IMR-90 (cell line): ENCODE measurements at regions of chr21 and their contacts with region 1.

Region 1: GRCh38 chr21:17925000-17925610 is 105.9 kb upstream of the C21orf91 start:
- DNase-seq: peak; percentile 54
- ATAC-seq: peak; percentile 88
- H3K4me3 ChIP-seq: no peak overlapping the region
- H3K27ac ChIP-seq: no peak overlapping the region
- H3K4me1 ChIP-seq: 0 out of 2 replicates have a peak, but pooled peaks cover 1% of the 10 kb centered on the region
- H3K27me3 ChIP-seq: no peaks in the 10 kb centered on the region; the same call in 1 of the 2 replicates
- CTCF ChIP-seq: peak; percentile 68
- POLR2A ChIP-seq: no peak
- RAD21 ChIP-seq: peak; percentile 56

Region 2: DNA sequence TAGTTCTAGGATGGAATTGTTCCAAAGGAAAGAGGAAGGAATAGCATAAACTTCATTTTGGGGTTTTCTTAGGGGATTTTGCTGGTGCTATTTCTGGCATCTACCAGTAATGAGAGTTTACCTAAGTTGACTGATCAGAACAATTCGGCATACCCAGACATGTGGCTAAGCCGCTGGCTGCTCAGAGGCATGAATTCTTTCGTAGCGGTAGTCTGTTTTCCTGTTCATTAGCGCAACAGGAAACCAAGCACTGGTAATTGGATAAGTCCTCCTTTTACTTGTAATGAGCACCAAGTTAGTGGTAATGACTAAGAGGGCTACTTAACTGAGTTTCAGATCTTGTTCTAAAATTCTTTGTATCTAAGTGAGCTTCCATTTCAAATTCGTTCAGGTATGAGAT is 144.6 kb before region 1 on chr21:
- CTCF ChIA-PET with region 1: no interaction called
- POLR2A ChIA-PET with region 1: no interaction called
- dilution Hi-C with region 1: no loop called
- in situ Hi-C with region 1: no loop called
- intact Hi-C with region 1: no loop called
- DNase-seq: no peak
- ATAC-seq: no peak
- H3K4me3 ChIP-seq: no peak overlapping the region
- H3K27ac ChIP-seq: no peak overlapping the region
- H3K4me1 ChIP-seq: no peaks in the 10 kb centered on the region
- H3K27me3 ChIP-seq: no peaks in the 10 kb centered on the region
- CTCF ChIP-seq: no peak
- POLR2A ChIP-seq: no peak
- RAD21 ChIP-seq: no peak

Region 3: GRCh38 chr21:17819114-17819876 is 105.8 kb before region 1 on chr21 and contains the start of gene C21orf91:
- CTCF ChIA-PET with region 1: no interaction called
- POLR2A ChIA-PET with region 1: no interaction called
- dilution Hi-C with region 1: no loop called
- in situ Hi-C with region 1: no loop called
- intact Hi-C with region 1: no loop called
- DNase-seq: peak; percentile 86
- ATAC-seq: peak; percentile 95
- H3K4me3 ChIP-seq: peak within 1 kb of the TSS; percentile 79
- H3K27ac ChIP-seq: peak within 1 kb of the TSS; percentile 94
- H3K4me1 ChIP-seq: peaks cover 4% of the 10 kb centered on the region
- H3K27me3 ChIP-seq: no peaks in the 10 kb centered on the region
- CTCF ChIP-seq: no peak
- POLR2A ChIP-seq: peak; percentile 93
- RAD21 ChIP-seq: no peak
- total RNA-seq, gene C21orf91: 9.3 and 13.1 TPM in 2 replicates

Region 4: GRCh38 chr21:17911628-17912027 is 13.5 kb before region 1 on chr21:
- CTCF ChIA-PET with region 1: interaction called, 13 read pairs
- POLR2A ChIA-PET with region 1: no interaction called
- dilution Hi-C with region 1: no loop called
- in situ Hi-C with region 1: no loop called
- intact Hi-C with region 1: no loop called
- DNase-seq: peak; percentile 42
- ATAC-seq: no peak; the same call in 1 of the 2 replicates
- H3K4me3 ChIP-seq: no peak overlapping the region
- H3K27ac ChIP-seq: no peak overlapping the region
- H3K4me1 ChIP-seq: no peaks in the 10 kb centered on the region
- H3K27me3 ChIP-seq: peaks cover 2% of the 10 kb centered on the region; the same call in 1 of the 2 replicates
- CTCF ChIP-seq: no peak
- POLR2A ChIP-seq: no peak
- RAD21 ChIP-seq: no peak

Region 5: DNA sequence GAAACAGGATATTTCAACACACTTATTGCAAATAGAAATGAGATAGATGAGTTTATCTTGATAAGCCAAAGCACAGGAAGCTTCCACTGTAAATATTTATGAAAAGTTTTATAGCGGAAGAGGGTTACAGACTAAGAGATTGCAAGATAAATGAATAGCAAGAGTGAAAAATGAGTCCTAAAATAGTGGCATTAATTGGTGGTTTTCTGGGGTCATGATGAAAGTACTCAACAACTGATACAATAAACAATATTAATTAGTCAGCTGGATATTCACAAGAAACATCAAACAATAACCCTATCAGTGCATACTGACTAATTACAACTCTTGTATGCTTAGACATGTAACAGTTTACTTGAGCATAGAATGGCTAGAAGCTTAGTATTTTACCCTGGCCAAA is 164.7 kb after region 1 on chr21:
- CTCF ChIA-PET with region 1: no interaction called
- POLR2A ChIA-PET with region 1: no interaction called
- dilution Hi-C with region 1: no loop called
- in situ Hi-C with region 1: no loop called
- intact Hi-C with region 1: no loop called
- DNase-seq: no peak
- ATAC-seq: no peak
- H3K4me3 ChIP-seq: no peak overlapping the region
- H3K27ac ChIP-seq: no peak overlapping the region
- H3K4me1 ChIP-seq: no peaks in the 10 kb centered on the region
- H3K27me3 ChIP-seq: no peaks in the 10 kb centered on the region
- CTCF ChIP-seq: no peak
- POLR2A ChIP-seq: no peak
- RAD21 ChIP-seq: no peak